HCT116 (cell line): ENCODE measurements at regions of chr11 and their contacts with region 1.

Region 1: DNA sequence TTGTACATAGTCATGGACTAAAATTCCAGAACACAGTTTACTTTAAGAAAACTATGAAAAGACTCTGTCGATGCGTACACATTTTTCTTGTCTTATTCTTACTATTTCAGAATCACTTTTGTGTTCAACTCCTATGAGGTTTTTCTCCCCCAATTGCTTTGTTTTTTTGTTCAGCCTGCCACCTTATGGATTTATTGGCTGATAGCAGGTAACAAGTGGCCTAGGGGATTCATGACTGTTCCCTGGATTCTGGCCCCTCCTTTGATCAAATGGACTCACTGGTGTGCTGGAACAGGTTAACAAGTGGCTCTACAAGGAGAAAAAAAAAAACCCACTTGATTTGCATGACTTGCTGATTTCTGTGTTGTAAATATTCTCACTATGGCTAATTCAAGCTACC is 10.6 kb downstream of the MMP20 start:
- DNase-seq: no peak
- ATAC-seq: peak; percentile 44
- H3K4me3 ChIP-seq: no peak overlapping the region
- H3K27ac ChIP-seq: no peak overlapping the region
- H3K4me1 ChIP-seq: peaks cover 18 to 62% of the 10 kb centered on the region in 2 experiments
- H3K27me3 ChIP-seq: no peaks in the 10 kb centered on the region
- CTCF ChIP-seq: peak; percentile 36 to 47 (median 46); a peak in 3 of 6 replicates
- POLR2A ChIP-seq: no peak
- RAD21 ChIP-seq: peak; percentile 63

Region 2: GRCh38 chr11:101848262-101848661 is 766.2 kb before region 1 on chr11:
- CTCF ChIA-PET with region 1: interaction called, 7 read pairs
- POLR2A ChIA-PET with region 1: no interaction called
- RAD21 ChIA-PET with region 1: no interaction called
- intact Hi-C with region 1: loop called (anchors 5 kb)
- DNase-seq: no peak
- ATAC-seq: no peak
- H3K4me3 ChIP-seq: no peak overlapping the region
- H3K27ac ChIP-seq: no peak overlapping the region
- H3K4me1 ChIP-seq: no peaks in the 10 kb centered on the region
- H3K27me3 ChIP-seq: no peaks in the 10 kb centered on the region
- CTCF ChIP-seq: peak in 2 of 3 experiments; percentile 49 to 63; a peak in 3 of 6 replicates
- POLR2A ChIP-seq: no peak
- RAD21 ChIP-seq: peak; percentile 71

Region 3: GRCh38 chr11:102287964-102288724 is 326.3 kb before region 1 on chr11:
- CTCF ChIA-PET with region 1: interaction called, 27 read pairs
- POLR2A ChIA-PET with region 1: interaction called, 3 read pairs
- RAD21 ChIA-PET with region 1: interaction called in 1 of 2 experiments, 4 read pairs
- intact Hi-C with region 1: loop called (anchors 2 kb)
- DNase-seq: peak; percentile 69
- ATAC-seq: peak; percentile 93
- H3K4me3 ChIP-seq: peak overlapping the region in 1 of 2 experiments; percentile 31; a peak in 2 of 4 replicates
- H3K27ac ChIP-seq: no peak overlapping the region
- H3K4me1 ChIP-seq: peaks cover 0 to 12% of the 10 kb centered on the region in 2 experiments; a peak in 2 of 4 replicates
- H3K27me3 ChIP-seq: no peaks in the 10 kb centered on the region
- CTCF ChIP-seq: peak; percentile 55 to 81 (median 73)
- POLR2A ChIP-seq: no peak
- RAD21 ChIP-seq: peak; percentile 89

Region 4: DNA sequence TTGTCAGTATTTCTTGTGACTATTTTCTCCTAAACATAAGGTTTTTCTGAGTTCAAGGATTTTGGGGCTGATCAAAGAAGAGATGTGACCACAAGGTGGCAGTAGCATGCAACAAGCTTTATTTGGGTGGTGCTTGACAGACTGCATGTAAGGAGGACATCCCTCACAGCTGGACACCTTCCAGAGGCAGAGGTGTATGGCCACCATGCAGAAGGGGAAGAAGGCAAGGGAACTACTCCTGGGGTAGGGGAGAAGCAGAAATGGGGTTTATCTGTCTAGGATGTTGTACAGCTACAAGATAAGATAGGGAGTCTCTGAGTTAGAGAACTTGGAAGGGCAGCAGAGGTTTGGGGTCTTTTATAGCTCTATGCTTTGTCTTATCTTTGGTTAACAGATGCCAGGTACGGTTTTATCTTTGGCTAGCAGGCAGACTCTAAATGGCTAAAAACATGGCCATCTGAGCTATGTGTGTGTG is 272.6 kb before region 1 on chr11:
- CTCF ChIA-PET with region 1: interaction called, 60 read pairs
- POLR2A ChIA-PET with region 1: interaction called, 4 read pairs
- RAD21 ChIA-PET with region 1: interaction called, 4 to 10 read pairs
- intact Hi-C with region 1: loop called (anchors 2 kb)
- DNase-seq: peak; percentile 89
- ATAC-seq: peak; percentile 83
- H3K4me3 ChIP-seq: no peak overlapping the region
- H3K27ac ChIP-seq: no peak overlapping the region
- H3K4me1 ChIP-seq: peaks cover 2 to 29% of the 10 kb centered on the region in 2 experiments; a peak in 3 of 4 replicates
- H3K27me3 ChIP-seq: no peaks in the 10 kb centered on the region
- CTCF ChIP-seq: peak; percentile 77 to 87 (median 86)
- POLR2A ChIP-seq: no peak
- RAD21 ChIP-seq: peak; percentile 91

Region 5: DNA sequence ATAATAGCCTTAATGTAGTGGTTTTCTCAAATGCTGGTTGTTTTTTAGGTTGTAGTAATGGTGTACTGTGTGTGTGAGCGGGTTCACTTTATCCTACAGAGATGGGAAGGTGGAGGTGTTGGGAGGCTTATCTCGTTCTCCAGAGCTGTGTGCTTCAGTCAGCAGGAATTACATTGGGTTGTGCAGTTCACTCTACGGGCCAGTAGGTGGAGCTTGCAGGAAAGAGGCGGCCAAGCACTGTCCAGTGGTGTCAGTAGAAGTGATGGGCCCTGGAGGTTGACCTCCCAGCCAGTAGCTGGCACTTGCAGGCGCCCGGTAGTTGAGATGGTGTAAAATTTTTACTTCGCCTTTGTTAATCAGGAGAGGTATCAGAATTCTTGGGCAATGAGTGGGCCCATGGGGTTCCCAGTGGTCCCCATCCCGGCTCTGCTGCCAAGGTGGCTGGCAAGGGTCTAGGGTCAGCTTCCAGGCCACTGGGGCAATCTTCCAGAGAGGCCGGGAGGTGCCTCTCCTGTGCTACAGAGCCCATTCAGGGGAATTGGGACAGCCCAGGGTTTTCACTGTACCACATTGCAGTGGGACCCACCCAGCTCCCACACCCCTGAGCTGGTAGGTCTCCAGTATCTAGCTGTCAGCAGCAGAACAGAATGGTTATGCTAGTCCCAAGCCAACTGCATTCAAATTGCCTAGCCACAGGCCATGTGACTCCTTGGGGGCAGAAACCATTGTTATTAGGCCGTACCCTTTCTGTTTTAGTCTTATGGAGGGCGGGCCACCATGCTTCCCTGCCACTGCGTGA is 223.6 kb before region 1 on chr11:
- CTCF ChIA-PET with region 1: interaction called, 29 read pairs
- POLR2A ChIA-PET with region 1: no interaction called
- RAD21 ChIA-PET with region 1: interaction called, 3 to 5 read pairs
- intact Hi-C with region 1: loop called (anchors 2 kb)
- DNase-seq: peak; percentile 42
- ATAC-seq: peak; percentile 92
- H3K4me3 ChIP-seq: no peak overlapping the region
- H3K27ac ChIP-seq: no peak overlapping the region
- H3K4me1 ChIP-seq: no peaks in the 10 kb centered on the region; a peak in 1 of 4 replicates
- H3K27me3 ChIP-seq: no peaks in the 10 kb centered on the region
- CTCF ChIP-seq: peak; percentile 69 to 87 (median 83)
- POLR2A ChIP-seq: no peak
- RAD21 ChIP-seq: peak; percentile 71

Region 6: DNA sequence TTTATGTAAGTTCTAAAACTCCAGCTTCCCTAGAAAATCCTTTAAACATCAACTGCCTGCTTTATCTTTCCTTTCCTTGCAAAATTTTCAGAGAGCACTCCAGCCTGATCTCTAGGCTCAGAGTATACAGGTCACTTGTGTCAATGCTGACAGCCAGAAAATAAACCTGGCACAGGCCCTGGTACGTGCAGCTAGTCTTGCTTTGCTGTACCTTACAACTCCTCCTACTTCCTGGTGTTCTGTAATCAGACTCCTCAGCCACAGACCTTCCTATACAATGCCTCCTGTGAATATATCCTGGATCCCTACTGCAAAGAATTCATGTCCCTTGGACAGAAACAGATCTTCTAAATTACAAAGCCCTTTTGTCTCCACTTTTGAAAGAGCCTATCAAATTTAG is 137.7 kb before region 1 on chr11:
- CTCF ChIA-PET with region 1: no interaction called
- POLR2A ChIA-PET with region 1: no interaction called
- RAD21 ChIA-PET with region 1: no interaction called
- intact Hi-C with region 1: no loop called
- DNase-seq: no peak
- ATAC-seq: peak; percentile 96
- H3K4me3 ChIP-seq: 0 out of 4 replicates have a peak overlapping the region, but pooled peaks of 1 of the 2 experiments have one; percentile 3
- H3K27ac ChIP-seq: no peak overlapping the region
- H3K4me1 ChIP-seq: peaks cover 7 to 14% of the 10 kb centered on the region in 2 experiments; a peak in 3 of 4 replicates
- H3K27me3 ChIP-seq: no peaks in the 10 kb centered on the region
- CTCF ChIP-seq: no peak
- POLR2A ChIP-seq: no peak
- RAD21 ChIP-seq: no peak; the same call in 1 of the 2 replicates

Region 7: DNA sequence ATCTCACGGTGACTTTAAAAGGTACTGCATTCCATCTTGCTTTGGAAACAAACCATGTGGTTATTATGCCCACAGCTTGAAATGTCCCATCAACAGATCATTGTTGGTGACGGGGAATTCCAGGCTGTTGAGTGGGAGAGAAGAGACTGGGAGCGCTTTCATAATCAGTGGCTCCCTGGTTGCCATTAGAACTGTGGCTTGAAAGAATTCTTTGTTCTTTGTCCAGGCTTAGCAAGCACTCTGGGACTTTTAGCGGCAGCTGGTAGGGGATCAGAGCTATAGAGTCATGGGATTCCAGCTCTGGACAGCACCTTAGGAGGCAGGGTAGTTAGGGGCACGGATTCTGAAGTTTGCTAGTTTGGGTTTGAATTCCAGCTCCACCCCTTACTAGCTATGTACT is 11.4 kb before region 1 on chr11:
- CTCF ChIA-PET with region 1: interaction called, 22 read pairs
- POLR2A ChIA-PET with region 1: interaction called, 5 read pairs
- RAD21 ChIA-PET with region 1: interaction called, 6 to 7 read pairs
- intact Hi-C with region 1: no loop called
- DNase-seq: peak; percentile 92
- ATAC-seq: peak; percentile 68
- H3K4me3 ChIP-seq: peak overlapping the region in 1 of 2 experiments; percentile 27; a peak in 2 of 4 replicates
- H3K27ac ChIP-seq: peak overlapping the region; percentile 85
- H3K4me1 ChIP-seq: peaks cover 72 to 98% of the 10 kb centered on the region in 2 experiments
- H3K27me3 ChIP-seq: no peaks in the 10 kb centered on the region
- CTCF ChIP-seq: no peak
- POLR2A ChIP-seq: no peak
- RAD21 ChIP-seq: peak; percentile 9; the same call in 1 of the 2 replicates

Region 8: GRCh38 chr11:102637731-102638130 is 23.2 kb after region 1 on chr11:
- CTCF ChIA-PET with region 1: no interaction called
- POLR2A ChIA-PET with region 1: no interaction called
- RAD21 ChIA-PET with region 1: no interaction called
- intact Hi-C with region 1: no loop called
- DNase-seq: no peak
- ATAC-seq: peak; percentile 90
- H3K4me3 ChIP-seq: no peak overlapping the region
- H3K27ac ChIP-seq: no peak overlapping the region
- H3K4me1 ChIP-seq: peaks cover 3 to 18% of the 10 kb centered on the region in 2 experiments; a peak in 3 of 4 replicates
- H3K27me3 ChIP-seq: no peaks in the 10 kb centered on the region
- CTCF ChIP-seq: no peak
- POLR2A ChIP-seq: no peak
- RAD21 ChIP-seq: no peak